ENCODE measurements at regions of chr9 and their contacts with region 1.

Region 1: GRCh38 chr9:94656200-94656599 is 16.9 kb upstream of the FBP1 start:
- DNase-seq: no peak
- ATAC-seq: peak; percentile 98
- H3K4me3 Mint-ChIP-seq: peak overlapping the region; percentile 79
- H3K27ac Mint-ChIP-seq: peak overlapping the region; percentile 74
- H3K4me1 Mint-ChIP-seq: peaks cover 15% of the 10 kb centered on the region
- H3K27me3 Mint-ChIP-seq: peaks cover 7% of the 10 kb centered on the region

Region 2: GRCh38 chr9:94668418-94668932 is 12.3 kb after region 1 on chr9:
- POLR2A ChIA-PET with region 1: interaction called, 11 read pairs
- DNase-seq: no peak
- ATAC-seq: no peak
- H3K4me3 Mint-ChIP-seq: no peak overlapping the region
- H3K27ac Mint-ChIP-seq: no peak overlapping the region
- H3K4me1 Mint-ChIP-seq: peaks cover 9% of the 10 kb centered on the region
- H3K27me3 Mint-ChIP-seq: peaks cover 19% of the 10 kb centered on the region

Region 3: DNA sequence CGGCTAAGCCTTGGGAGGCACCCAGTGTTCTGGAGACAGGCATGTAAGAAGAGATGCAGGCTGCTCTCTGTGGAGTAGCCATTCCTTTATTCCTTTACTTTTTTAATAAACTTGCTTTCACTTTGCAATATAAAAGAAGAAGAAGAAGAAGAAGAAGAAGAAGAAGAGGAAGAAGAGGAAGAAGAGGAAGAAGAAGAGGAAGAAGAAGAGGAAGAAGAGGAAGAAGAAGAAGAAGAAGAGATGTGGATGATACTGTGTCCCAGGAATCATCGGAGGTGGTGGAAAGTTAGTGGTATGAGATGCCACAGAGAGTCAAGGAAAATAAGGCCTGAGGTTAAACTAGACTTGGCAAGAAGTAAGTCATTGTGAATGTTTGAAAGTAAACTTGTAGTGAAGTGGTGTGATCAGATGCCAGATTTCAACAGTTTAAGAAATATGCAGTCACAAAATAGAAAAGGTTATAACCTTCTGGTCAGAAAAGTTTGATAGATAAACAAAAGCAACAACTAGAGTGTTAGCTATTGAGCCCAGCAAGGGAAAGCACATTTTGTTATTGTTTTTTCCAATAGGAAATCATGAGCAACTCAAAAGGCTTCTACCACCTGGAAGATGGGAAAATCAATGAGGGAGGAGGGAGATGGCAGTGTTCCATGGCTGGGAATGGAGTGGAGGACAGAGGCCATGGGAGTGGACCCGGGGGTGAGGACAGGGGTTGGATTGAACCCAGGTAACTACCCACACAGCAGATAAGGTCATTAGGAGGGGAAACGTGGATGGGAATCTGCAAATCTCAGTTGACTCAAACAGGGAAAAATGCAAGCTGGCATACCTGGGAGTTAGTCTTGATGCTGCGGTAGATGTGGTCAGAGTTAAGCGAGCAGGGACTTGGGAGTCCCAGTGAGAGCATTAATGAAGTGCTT is 87.1 kb after region 1 on chr9:
- POLR2A ChIA-PET with region 1: no interaction called
- DNase-seq: no peak
- ATAC-seq: no peak
- H3K4me3 Mint-ChIP-seq: no peak overlapping the region
- H3K27ac Mint-ChIP-seq: no peak overlapping the region
- H3K4me1 Mint-ChIP-seq: peaks cover 6% of the 10 kb centered on the region
- H3K27me3 Mint-ChIP-seq: no peaks in the 10 kb centered on the region